PC-9 (cell line): ENCODE measurements at regions of chr2 and their contacts with region 1.

Region 1: GRCh38 chr2:96856776-96857673 is 791 bp downstream of the ANKRD39 start:
- DNase-seq: no peak
- H3K4me3 ChIP-seq: peak overlapping the region; percentile 72
- H3K27ac ChIP-seq: no peak overlapping the region
- H3K4me1 ChIP-seq: peaks cover 10% of the 10 kb centered on the region
- H3K27me3 ChIP-seq: no peaks in the 10 kb centered on the region
- CTCF ChIP-seq: no peak

Region 2: DNA sequence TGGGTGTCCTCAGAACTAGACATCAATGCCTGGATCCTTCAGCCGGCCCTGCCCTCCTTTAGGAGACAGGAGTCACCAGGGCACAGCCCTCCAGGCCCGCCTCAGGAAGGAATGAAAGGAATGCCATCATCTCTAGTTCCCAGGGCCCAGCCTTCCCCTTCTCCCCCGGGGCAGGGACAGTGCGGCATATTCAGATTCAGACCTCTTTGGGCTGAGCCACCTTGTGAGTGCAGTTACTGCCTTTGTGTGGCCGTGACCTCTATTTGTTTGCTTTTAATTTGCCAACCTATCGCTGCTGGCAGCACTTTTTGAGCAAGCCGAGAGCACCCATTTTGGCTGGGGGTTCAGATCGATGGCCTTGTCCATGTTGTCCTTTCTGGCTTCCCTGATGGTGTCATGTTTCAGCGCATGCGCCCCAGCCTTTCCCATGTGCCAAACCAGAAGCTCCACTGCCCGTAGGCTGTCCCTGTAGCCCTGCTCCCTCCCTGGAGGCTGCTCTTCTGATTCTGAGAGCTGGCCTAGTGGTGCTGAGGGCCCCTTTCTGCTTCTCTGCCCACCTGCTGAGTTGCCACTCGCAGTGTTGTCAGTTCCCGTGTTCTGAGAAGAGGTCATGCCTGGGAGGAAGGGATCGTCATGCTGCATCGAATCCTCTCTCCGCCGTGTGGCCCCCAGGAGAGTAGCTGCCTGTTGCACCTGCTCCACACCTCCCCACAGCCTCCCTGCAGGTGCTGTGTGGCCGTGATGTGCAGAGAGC is 24.1 kb before region 1 on chr2:
- CTCF ChIA-PET with region 1: interaction called, 9 read pairs
- POLR2A ChIA-PET with region 1: no interaction called
- intact Hi-C with region 1: loop called (anchors 2 kb)
- DNase-seq: peak; percentile 90 to 94
- H3K4me3 ChIP-seq: peak overlapping the region; percentile 30; the same call in 1 of the 2 replicates
- H3K27ac ChIP-seq: peak overlapping the region; percentile 86
- H3K4me1 ChIP-seq: peaks cover 25% of the 10 kb centered on the region
- H3K27me3 ChIP-seq: no peaks in the 10 kb centered on the region
- CTCF ChIP-seq: no peak

Region 3: DNA sequence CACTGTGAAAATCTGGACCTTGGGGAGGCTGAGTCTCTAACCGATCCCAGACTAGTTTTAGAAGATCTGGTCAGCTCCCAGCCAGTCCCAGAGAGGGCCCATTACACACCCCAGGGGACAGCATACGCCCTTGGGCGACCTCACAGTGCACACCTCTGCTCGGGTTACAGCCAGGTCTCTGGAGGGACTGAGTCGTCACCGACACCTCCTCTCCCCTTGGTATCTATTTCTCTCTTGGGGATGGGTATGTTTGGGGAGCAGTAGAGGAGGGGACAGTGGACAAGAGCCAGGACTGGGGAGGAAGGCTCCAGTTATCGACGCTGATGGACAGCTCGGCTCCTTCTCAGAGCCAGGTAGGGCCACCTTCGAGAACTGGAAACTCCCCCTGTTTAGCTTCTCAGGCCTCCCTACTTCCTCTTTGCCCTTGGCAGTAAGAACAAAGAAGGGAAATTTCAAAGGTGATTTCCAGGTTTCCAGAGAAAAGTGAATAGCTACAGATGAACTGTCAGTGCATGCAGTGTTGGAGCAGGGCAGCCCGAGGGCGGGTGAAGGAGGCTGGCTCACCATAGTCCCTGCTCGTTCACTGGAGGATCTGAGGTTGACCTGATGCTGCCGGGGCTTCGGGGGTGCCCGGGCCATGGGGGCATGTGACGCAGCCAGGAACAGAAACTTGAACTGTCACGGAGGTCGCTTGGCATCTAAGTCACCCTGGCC is 17.2 kb after region 1 on chr2:
- CTCF ChIA-PET with region 1: no interaction called
- POLR2A ChIA-PET with region 1: interaction called, 32 read pairs
- intact Hi-C with region 1: loop called (anchors 1 kb)
- DNase-seq: peak; percentile 55 to 59
- H3K4me3 ChIP-seq: no peak overlapping the region
- H3K27ac ChIP-seq: peak overlapping the region; percentile 3; the same call in 1 of the 2 replicates
- H3K4me1 ChIP-seq: peaks cover 77% of the 10 kb centered on the region
- H3K27me3 ChIP-seq: no peaks in the 10 kb centered on the region
- CTCF ChIP-seq: no peak

Region 4: GRCh38 chr2:96951093-96951654 is 94.1 kb after region 1 on chr2:
- CTCF ChIA-PET with region 1: interaction called, 36 read pairs
- POLR2A ChIA-PET with region 1: interaction called, 4 read pairs
- intact Hi-C with region 1: loop called (anchors 1 kb)
- DNase-seq: peak; percentile 57 to 88
- H3K4me3 ChIP-seq: no peak overlapping the region
- H3K27ac ChIP-seq: no peak overlapping the region
- H3K4me1 ChIP-seq: no peaks in the 10 kb centered on the region
- H3K27me3 ChIP-seq: no peaks in the 10 kb centered on the region
- CTCF ChIP-seq: peak; percentile 99